ENCODE measurements at regions of chr16 and their contacts with region 1.

Region 1: DNA sequence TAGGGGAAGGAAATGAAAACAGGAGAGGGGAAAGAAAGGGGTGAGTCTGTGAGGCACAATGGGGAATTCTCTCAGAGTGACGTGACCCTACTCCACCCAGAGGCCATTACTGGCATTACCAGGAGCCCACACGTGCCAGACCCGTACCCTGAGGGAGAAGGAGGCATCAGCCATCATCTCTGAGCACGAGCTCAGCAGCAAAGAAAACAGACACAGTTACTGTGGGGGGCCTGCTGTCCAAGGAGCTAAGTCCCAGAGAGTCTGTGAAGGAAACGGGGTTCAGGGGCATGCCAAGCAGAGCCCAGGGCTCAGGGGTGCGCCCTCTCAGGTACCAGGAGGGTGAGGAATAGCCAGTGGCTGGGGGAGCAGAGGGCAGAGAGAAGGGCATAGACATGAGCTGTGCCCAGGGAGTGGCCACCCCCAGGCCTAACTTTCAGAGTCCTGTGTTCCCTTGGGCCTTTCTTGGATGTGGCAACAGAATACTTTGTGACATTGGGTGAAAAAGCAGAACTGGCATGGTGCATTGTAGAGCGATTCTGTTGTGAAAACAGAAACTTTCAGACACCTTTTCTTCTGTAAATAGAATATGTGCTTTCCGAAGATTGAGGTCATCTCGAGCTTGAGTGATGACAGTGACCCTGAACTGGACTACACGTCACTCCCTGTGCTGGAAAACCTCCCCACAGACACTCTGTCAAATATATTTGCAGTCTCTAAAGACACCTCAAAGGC is 11.3 kb downstream of the TAF1C start:
- DNase-seq: peak in 3 of 6 donors; percentile 46 to 75 (median 59)
- ATAC-seq: peak; percentile 82 to 90 (median 86)
- H3K4me3 ChIP-seq: no peak overlapping the region
- H3K27ac ChIP-seq: no peak overlapping the region
- H3K4me1 ChIP-seq: peaks cover 0 to 6% (median 0%) of the 10 kb centered on the region in 3 donors
- H3K27me3 ChIP-seq: no peaks in the 10 kb centered on the region
- CTCF ChIP-seq: peak; percentile 40 to 79 (median 58)

Region 2: GRCh38 chr16:84013787-84014569 is 161.5 kb before region 1 on chr16:
- intact Hi-C with region 1: no loop called
- DNase-seq: peak; percentile 83 to 91 (median 90)
- ATAC-seq: peak; percentile 85 to 92 (median 88)
- H3K4me3 ChIP-seq: no peak overlapping the region
- H3K27ac ChIP-seq: no peak overlapping the region
- H3K4me1 ChIP-seq: no peaks in the 10 kb centered on the region
- H3K27me3 ChIP-seq: no peaks in the 10 kb centered on the region
- CTCF ChIP-seq: no peak

Region 3: DNA sequence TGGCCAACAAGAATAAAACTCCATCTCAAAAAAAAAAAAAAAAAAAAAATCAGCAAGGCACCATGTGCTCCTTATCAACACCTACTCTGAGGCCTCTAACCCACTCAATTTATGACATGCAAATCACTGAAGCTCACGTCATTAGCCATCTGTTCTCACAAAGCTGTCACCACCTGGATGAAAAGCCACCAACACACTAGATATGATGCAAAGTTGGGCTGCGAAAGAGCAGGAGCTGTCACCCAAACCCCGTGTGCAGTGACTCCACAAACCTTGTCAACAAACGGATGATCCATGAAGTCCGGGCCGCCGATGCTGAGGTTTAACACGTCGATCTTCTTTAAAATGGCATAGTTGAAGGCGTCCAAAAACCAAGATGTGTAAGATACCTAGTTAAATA is 84.1 kb before region 1 on chr16:
- intact Hi-C with region 1: loop called in 2 of 3 experiments (anchors 5 to 10 kb)
- DNase-seq: no peak
- ATAC-seq: peak in 1 of 4 donors; percentile 31
- H3K4me3 ChIP-seq: no peak overlapping the region
- H3K27ac ChIP-seq: no peak overlapping the region
- H3K4me1 ChIP-seq: peaks cover 0 to 8% (median 8%) of the 10 kb centered on the region in 3 donors
- H3K27me3 ChIP-seq: no peaks in the 10 kb centered on the region
- CTCF ChIP-seq: no peak

Measured in pancreas (tissue), 10 donors.